ENCODE measurements at regions of chr9 and their contacts with region 1.

Region 1: DNA sequence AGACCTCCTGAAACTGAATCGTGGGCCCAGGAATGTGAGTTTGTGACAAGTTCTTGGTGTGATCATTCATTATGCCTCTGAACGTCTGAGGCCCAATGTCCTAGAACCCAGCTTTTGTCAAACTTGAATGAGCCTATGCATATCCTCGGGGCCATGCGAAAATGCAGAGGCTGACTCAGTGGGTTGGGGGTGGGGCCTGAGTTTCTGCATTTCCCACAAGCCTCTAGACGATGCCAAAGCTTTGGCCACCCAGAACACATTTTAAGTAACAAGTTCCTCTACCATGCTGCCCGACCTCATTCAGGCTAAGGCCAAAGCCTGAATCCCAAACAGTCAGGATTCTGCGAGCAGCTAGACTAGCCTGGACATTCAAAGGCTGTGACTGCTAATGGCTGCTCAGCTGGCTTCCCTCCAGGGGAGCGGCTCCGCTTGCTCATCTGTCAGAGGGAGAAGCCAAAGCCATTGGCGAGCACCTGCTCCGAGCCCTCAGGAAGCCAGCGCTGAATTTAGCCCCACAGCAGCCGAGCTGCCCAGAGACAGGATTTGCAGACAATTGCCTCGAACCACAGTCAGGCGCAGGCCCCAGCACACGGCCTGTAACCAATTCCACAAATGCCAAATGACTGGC is 177.5 kb downstream of the ZDHHC21 start:
- DNase-seq: peak; percentile 65 to 73
- H3K4me3 ChIP-seq: no peak overlapping the region
- H3K27ac ChIP-seq: no peak overlapping the region
- H3K4me1 ChIP-seq: peaks cover 0 to 17% (median 13%) of the 10 kb centered on the region in 4 experiments; a peak in 6 of 7 replicates
- H3K27me3 ChIP-seq: no peaks in the 10 kb centered on the region
- CTCF ChIP-seq: no peak
- EP300 ChIP-seq: no peak
- POLR2A ChIP-seq: no peak
- RAD21 ChIP-seq: no peak

Region 2: GRCh38 chr9:14504886-14505285 is 10.8 kb before region 1 on chr9:
- CTCF ChIA-PET with region 1: interaction called, 11 read pairs
- POLR2A ChIA-PET with region 1: interaction called, 3 read pairs
- DNase-seq: no peak
- H3K4me3 ChIP-seq: no peak overlapping the region
- H3K27ac ChIP-seq: no peak overlapping the region
- H3K4me1 ChIP-seq: no peaks in the 10 kb centered on the region
- H3K27me3 ChIP-seq: no peaks in the 10 kb centered on the region
- CTCF ChIP-seq: no peak
- EP300 ChIP-seq: no peak
- POLR2A ChIP-seq: no peak
- RAD21 ChIP-seq: no peak